H1 (cell line): ENCODE measurements at regions of chr1 and their contacts with region 1.

Region 1: GRCh38 chr1:206059355-206059915 is 6.5 kb downstream of the RHEX start:
- DNase-seq: no peak
- H3K4me3 ChIP-seq: no peak overlapping the region
- H3K27ac ChIP-seq: no peak overlapping the region
- H3K4me1 ChIP-seq: no peaks in the 10 kb centered on the region
- H3K27me3 ChIP-seq: no peaks in the 10 kb centered on the region
- CTCF ChIP-seq: no peak
- EP300 ChIP-seq: no peak
- POLR2A ChIP-seq: no peak
- RAD21 ChIP-seq: no peak

Region 2: DNA sequence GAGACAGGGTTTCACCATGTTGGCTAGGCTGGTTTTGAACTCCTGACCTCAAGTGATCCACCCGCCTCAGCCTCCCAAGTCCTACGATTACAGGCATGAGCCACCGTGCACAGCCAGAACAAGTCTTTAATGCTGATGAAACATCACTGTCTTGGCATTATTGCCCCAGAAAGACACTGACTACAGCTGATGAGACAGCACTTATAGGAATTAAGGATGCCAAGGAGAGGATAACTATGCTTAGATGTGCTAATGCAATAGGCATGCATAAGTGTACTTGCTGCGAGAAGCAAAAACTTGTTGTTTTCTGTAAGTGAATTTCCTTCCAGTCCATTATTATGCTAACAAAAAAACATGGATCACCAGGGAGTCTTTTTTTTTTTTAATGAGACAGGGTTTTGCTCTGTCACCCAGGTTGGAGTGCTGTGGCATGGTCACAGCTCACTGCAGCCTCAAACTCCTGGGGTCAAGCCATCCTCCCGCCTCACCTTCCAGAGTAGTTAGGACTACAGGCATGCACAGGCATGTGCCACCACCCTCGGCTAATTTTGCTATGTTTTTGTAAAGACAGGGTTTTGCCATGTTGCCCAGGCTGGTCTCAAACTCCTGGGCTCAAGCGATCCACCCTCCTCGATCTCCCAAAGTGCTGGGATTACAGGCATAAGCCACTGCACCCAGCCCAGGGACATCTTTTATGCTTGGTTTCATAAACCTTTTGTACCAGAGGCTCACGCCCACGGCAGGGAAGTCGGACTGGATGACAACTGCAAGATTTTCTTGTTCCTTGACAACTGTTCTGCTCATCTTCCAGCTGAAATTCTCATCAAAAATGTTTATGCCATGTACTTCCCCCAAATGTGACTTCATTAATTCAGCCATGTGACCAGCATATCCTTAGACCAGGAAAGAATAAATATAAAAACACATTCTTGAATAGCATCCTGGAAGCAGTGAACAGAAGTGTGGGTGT is 16.6 kb after region 1 on chr1:
- CTCF ChIA-PET with region 1: no interaction called
- POLR2A ChIA-PET with region 1: no interaction called
- DNase-seq: no peak
- H3K4me3 ChIP-seq: no peak overlapping the region
- H3K27ac ChIP-seq: no peak overlapping the region
- H3K4me1 ChIP-seq: peaks cover 0 to 9% (median 3%) of the 10 kb centered on the region in 4 experiments; a peak in 3 of 7 replicates
- H3K27me3 ChIP-seq: no peaks in the 10 kb centered on the region
- CTCF ChIP-seq: no peak
- EP300 ChIP-seq: no peak
- POLR2A ChIP-seq: no peak
- RAD21 ChIP-seq: no peak

Region 3: DNA sequence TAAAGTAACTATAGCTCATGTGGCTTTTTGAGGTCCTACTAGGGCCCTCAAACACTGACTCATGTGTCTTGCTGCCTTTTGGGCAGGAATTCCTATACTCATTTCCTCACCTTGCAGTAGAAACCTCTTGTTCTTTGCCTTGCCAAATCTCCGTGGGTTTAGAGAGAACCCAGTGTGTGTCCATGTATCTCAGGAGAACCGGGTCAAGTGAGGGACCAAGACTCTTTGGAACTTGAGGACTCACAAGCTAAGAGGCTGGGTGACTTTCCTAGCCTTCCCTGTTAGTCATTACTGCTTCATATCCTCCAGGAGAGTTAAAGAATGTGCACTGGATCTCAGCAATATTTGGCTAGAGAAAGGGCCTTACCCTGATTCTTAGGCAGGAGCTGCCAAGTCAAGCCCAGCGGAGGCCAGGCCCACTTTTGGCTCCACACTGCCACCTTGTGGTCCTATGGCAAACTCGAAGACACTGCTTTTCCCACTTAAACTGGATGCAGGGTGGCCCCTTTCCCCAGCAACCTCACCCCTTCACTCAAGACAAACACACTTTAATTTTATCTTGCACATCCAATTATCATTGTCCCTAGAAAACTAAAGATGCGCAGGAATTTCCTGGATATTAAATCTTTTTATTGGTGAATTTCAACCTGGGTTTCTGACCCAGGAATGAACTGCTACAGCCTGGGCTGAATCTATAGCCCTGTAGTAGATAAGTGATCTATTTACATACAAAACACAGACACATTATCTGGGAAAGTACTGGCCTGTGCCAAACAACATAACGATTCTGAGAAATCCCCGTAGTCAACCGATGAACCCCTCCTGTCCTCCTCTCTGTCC is 47.1 kb after region 1 on chr1:
- CTCF ChIA-PET with region 1: interaction called, 13 read pairs
- POLR2A ChIA-PET with region 1: no interaction called
- DNase-seq: peak; percentile 47 to 91
- H3K4me3 ChIP-seq: no peak overlapping the region
- H3K27ac ChIP-seq: no peak overlapping the region
- H3K4me1 ChIP-seq: no peaks in the 10 kb centered on the region
- H3K27me3 ChIP-seq: no peaks in the 10 kb centered on the region
- CTCF ChIP-seq: peak; percentile 92 to 95 (median 93)
- EP300 ChIP-seq: no peak
- POLR2A ChIP-seq: no peak
- RAD21 ChIP-seq: peak; percentile 93 to 96